Activated T-helper 1 cell treated with anti-CD3 and anti-CD28 coated beads, Interleukin-12 subunit alpha, Interleukin-12 subunit beta, Interleukin-2, Interleukin-4 antibody, amounts not matched to agents 30 ng/mL and 10 ng/mL and 1 ng/mL, durations not matched to agents 14 hours and 24 hours and 36 hours (primary cell): ENCODE measurements at regions of chr1 and their contacts with region 1.

Region 1: DNA sequence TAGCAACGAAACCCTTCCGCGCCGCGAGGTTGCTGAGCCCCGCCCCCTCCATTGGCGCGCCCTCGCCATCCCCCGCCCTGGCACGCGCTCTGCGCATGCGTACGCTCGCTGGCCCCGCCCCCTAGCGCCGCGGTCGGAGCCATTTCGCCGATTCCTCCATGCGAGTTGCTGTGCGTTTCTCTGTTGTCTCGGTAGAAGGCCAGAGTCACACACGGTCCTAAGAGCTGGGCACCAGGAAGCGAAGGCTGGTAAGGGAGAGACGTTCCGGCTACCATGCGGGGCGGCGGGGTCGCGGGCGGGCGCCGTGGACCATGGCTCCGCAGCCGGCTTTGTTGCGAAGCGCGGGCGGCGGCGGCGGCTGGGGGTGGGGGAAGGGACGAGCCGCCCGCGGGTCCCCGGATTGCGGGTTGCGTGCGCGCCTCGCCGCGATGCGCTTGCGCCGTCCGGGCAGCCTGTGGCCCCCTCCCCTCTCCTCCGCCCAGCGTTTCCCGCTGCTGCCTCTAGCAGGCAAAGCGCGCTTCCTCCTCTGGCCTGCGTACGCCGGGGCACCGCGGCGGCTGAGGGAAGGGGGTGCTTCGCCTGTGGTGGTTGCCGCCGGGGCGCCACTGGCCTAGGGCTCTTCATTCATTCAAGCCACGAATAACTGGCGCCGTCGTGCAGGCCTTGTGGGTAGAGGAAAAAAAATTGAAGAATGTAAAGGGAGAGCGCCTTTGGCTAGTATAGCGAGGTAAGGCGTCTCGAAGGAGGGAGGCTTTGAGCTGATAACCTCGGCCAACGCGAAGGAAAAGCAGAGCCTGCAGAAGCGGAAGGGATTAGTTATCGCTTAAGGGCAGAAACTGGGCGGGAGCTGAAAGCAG is at the start of gene DHX9:
- DNase-seq: peak; percentile 94
- H3K4me3 Mint-ChIP-seq: peak within 1 kb of the TSS; percentile 94
- H3K27ac Mint-ChIP-seq: peak within 1 kb of the TSS; percentile 98
- H3K4me1 Mint-ChIP-seq: peaks cover 47% of the 10 kb centered on the region
- H3K27me3 Mint-ChIP-seq: peaks cover 3% of the 10 kb centered on the region
- total RNA-seq, gene DHX9: 346 and 355 TPM in 2 replicates

Region 2: GRCh38 chr1:182588500-182589452 is 250.7 kb before region 1 on chr1 and contains the start of gene RNASEL:
- intact Hi-C with region 1: loop called (anchors 1 kb)
- DNase-seq: peak; percentile 43
- H3K4me3 Mint-ChIP-seq: peak within 1 kb of the TSS; percentile 98
- H3K27ac Mint-ChIP-seq: peak within 1 kb of the TSS; percentile 98
- H3K4me1 Mint-ChIP-seq: peaks cover 44% of the 10 kb centered on the region
- H3K27me3 Mint-ChIP-seq: no peaks in the 10 kb centered on the region
- total RNA-seq, gene RNASEL: 4.6 and 5.0 TPM in 2 replicates

Region 3: DNA sequence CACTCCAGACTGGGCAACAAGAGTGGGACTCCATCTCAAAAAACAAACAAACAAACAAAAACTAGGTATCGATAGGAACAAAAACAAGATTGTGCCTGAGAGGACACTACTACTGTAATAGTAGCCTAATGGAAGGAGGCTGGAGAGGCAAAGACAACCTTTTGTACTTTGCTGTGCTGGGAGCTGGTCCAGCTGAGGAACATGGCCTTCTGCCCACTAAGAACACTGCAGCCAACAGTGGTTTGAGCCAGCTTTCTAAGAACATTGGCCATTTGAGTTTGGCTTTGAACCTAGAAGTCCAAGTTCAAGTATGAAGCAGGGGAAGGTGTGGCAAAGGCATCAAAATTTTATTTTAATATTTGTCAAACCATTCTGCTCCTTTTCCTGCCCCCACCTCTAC is 132.3 kb before region 1 on chr1:
- intact Hi-C with region 1: loop called (anchors 5 kb)
- DNase-seq: no peak
- H3K4me3 Mint-ChIP-seq: no peak overlapping the region
- H3K27ac Mint-ChIP-seq: no peak overlapping the region
- H3K4me1 Mint-ChIP-seq: peaks cover 28% of the 10 kb centered on the region
- H3K27me3 Mint-ChIP-seq: peaks cover 2% of the 10 kb centered on the region

Region 4: GRCh38 chr1:182789138-182790076 is 50.0 kb before region 1 on chr1 and contains the start of gene NPL:
- intact Hi-C with region 1: loop called (anchors 1 kb)
- DNase-seq: peak; percentile 86
- H3K4me3 Mint-ChIP-seq: peak within 1 kb of the TSS; percentile 92
- H3K27ac Mint-ChIP-seq: peak within 1 kb of the TSS; percentile 86
- H3K4me1 Mint-ChIP-seq: peaks cover 18% of the 10 kb centered on the region
- H3K27me3 Mint-ChIP-seq: peaks cover 14% of the 10 kb centered on the region
- total RNA-seq, gene NPL: 6.4 and 6.9 TPM in 2 replicates